Activated B cell treated with CpG ODN at 0.5 μM for 24 hours (primary cell): ENCODE measurements at regions of chr1 and their contacts with region 1.

Region 1: DNA sequence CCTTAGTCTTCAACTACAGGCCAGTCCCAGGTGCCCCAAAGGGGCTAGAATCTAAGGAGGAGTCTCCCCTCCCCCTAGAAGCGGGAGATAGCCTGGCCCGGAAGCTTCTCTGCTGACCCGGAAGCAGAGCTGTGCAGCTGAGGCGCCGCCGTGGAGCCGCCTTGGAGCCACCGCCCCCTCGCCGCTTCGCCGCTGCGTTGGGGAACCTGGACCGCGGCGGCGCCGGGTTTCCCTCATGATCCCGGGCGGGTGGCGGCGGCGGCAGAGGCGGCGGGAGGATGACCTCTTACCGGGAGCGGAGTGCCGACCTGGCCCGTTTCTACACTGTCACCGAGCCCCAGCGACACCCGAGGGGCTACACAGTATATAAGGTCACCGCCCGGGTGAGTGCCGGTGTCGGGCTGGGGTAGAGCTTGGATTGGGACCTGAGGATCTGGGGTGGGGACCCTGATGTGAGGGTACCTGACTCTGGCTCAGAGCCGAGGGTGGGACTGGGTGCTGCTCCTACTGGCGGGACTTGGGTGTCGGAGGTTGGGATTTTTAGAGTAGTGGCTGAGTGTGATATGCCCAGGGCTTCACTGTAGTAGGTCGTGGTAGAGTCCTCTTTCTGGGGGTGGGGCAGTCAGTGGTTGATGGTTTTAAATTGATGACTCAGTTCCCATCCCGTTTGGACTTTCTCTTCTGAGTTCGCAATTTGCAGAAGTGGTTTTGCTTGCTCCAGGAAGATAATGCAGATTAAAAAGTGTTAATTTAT is at the start of gene RPS6KC1:
- DNase-seq: peak; percentile 73
- ATAC-seq: peak; percentile 93
- H3K4me3 Mint-ChIP-seq: peak within 1 kb of the TSS; percentile 97
- H3K27ac Mint-ChIP-seq: peak within 1 kb of the TSS; percentile 92
- H3K4me1 Mint-ChIP-seq: peaks cover 25% of the 10 kb centered on the region
- H3K27me3 Mint-ChIP-seq: peaks cover 20% of the 10 kb centered on the region
- CTCF ChIP-seq: no peak
- total RNA-seq, gene RPS6KC1: 12.9 and 13.0 TPM in 2 replicates

Region 2: GRCh38 chr1:212990276-212990675 is 61.0 kb before region 1 on chr1:
- CTCF ChIA-PET with region 1: no interaction called
- POLR2A ChIA-PET with region 1: no interaction called
- intact Hi-C with region 1: no loop called
- DNase-seq: no peak
- ATAC-seq: no peak
- H3K4me3 Mint-ChIP-seq: no peak overlapping the region
- H3K27ac Mint-ChIP-seq: no peak overlapping the region
- H3K4me1 Mint-ChIP-seq: no peaks in the 10 kb centered on the region
- H3K27me3 Mint-ChIP-seq: no peaks in the 10 kb centered on the region
- CTCF ChIP-seq: no peak

Region 3: DNA sequence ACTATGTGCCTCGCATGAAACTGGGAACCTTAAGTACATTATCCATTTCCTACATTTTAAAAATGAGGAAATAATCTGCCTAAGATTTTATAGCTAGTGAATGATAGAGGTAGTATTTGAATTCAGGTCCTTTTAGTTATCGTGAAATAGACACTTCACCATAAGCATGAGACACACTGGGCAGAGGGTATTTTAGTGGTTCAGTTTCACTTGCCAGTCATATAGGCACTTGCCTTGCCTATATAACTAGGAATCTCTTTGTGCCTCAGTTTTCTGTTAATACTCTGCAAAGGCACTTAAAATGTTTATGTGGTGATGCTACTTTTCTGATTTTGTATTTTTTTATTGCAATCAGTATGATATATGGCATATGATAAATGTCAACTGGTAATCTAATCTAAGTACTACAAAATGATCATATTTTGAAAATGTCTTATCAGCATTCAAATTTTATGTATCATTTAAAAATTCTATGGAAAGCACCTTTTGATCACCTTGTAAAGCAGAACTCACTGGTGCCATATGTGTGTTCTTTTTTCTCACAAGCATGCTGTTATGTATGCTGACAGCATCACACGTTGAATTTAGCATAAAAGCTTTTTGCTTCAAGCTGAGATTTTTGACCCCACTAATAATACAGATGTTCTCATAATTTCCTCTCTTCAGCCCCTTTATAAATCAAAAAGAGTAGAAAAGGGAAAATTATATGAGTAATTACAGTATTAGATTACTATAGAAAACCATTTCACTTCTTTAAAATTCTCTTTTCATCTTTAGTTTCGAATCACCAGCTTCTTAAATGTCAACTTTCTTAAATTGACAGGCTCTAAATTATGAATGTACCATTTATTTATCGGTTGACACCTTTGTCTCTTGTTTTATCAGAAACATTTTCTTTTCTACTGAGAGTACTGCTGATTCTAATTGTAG is 52.3 kb after region 1 on chr1:
- CTCF ChIA-PET with region 1: no interaction called
- POLR2A ChIA-PET with region 1: interaction called, 4 read pairs
- intact Hi-C with region 1: loop called (anchors 5 kb)
- DNase-seq: no peak
- ATAC-seq: peak; percentile 70
- H3K4me3 Mint-ChIP-seq: peak overlapping the region; percentile 21
- H3K27ac Mint-ChIP-seq: peak overlapping the region; percentile 73
- H3K4me1 Mint-ChIP-seq: peaks cover 18% of the 10 kb centered on the region
- H3K27me3 Mint-ChIP-seq: no peaks in the 10 kb centered on the region
- CTCF ChIP-seq: no peak

Region 4: GRCh38 chr1:213564215-213564659 is 512.9 kb after region 1 on chr1:
- CTCF ChIA-PET with region 1: no interaction called
- POLR2A ChIA-PET with region 1: no interaction called
- intact Hi-C with region 1: no loop called
- DNase-seq: no peak
- ATAC-seq: no peak
- H3K4me3 Mint-ChIP-seq: no peak overlapping the region
- H3K27ac Mint-ChIP-seq: no peak overlapping the region
- H3K4me1 Mint-ChIP-seq: no peaks in the 10 kb centered on the region
- H3K27me3 Mint-ChIP-seq: no peaks in the 10 kb centered on the region
- CTCF ChIP-seq: no peak